IMR-90 (cell line): ENCODE measurements at regions of chr20 and their contacts with region 1.

Region 1: GRCh38 chr20:56554869-56555268 is 21.8 kb downstream of the FAM209B start:
- DNase-seq: peak; percentile 90
- ATAC-seq: peak; percentile 81
- H3K4me3 ChIP-seq: no peak overlapping the region
- H3K27ac ChIP-seq: no peak overlapping the region
- H3K4me1 ChIP-seq: no peaks in the 10 kb centered on the region
- H3K27me3 ChIP-seq: peaks cover 10% of the 10 kb centered on the region
- CTCF ChIP-seq: no peak
- POLR2A ChIP-seq: no peak
- RAD21 ChIP-seq: no peak

Region 2: GRCh38 chr20:56453352-56453751 is 101.5 kb before region 1 on chr20:
- CTCF ChIA-PET with region 1: no interaction called
- POLR2A ChIA-PET with region 1: no interaction called
- dilution Hi-C with region 1: no loop called
- in situ Hi-C with region 1: no loop called
- intact Hi-C with region 1: no loop called
- DNase-seq: no peak
- ATAC-seq: no peak
- H3K4me3 ChIP-seq: no peak overlapping the region
- H3K27ac ChIP-seq: no peak overlapping the region
- H3K4me1 ChIP-seq: no peaks in the 10 kb centered on the region
- H3K27me3 ChIP-seq: no peaks in the 10 kb centered on the region
- CTCF ChIP-seq: no peak
- POLR2A ChIP-seq: no peak
- RAD21 ChIP-seq: no peak

Region 3: DNA sequence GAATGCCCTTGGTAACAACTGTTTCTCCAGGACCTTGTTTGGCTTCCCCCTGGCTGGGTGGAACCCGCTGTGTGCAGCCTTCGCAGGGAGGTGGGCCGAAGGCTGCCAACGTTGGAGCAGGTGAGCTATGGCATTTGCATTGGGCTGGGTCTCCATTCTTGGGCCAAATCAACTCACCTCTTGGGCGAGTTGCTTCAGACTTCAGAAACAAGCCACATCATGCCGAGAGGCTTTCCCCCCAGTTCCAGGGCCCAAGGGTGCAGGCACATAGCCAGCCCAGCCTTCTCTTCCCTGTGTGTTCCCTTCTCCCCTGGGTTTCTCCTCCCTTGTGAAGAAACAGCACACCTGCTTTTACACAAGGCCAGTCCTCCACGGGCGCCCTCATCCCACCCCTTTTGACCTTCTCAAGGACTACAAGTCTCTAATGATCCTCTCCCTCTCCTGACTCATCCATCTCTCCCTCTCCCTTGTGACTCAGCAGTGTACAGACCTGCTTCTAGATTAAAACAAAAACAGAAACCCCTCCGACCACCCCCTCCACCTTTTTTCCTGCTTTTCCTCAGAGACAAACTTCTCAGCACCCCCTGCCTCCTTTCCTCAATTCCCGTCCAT is 19.8 kb after region 1 on chr20:
- CTCF ChIA-PET with region 1: interaction called, 16 read pairs
- POLR2A ChIA-PET with region 1: no interaction called
- dilution Hi-C with region 1: no loop called
- in situ Hi-C with region 1: no loop called
- intact Hi-C with region 1: loop called (anchors 1 kb)
- DNase-seq: no peak
- ATAC-seq: no peak
- H3K4me3 ChIP-seq: no peak overlapping the region
- H3K27ac ChIP-seq: no peak overlapping the region
- H3K4me1 ChIP-seq: no peaks in the 10 kb centered on the region
- H3K27me3 ChIP-seq: peaks cover 14% of the 10 kb centered on the region
- CTCF ChIP-seq: no peak
- POLR2A ChIP-seq: no peak
- RAD21 ChIP-seq: no peak

Region 4: GRCh38 chr20:56974499-56975236 is 419.8 kb after region 1 on chr20:
- CTCF ChIA-PET with region 1: interaction called, 10 read pairs
- POLR2A ChIA-PET with region 1: no interaction called
- dilution Hi-C with region 1: no loop called
- in situ Hi-C with region 1: loop called (anchors 5 kb)
- intact Hi-C with region 1: loop called (anchors 1 kb)
- DNase-seq: peak; percentile 37
- ATAC-seq: peak; percentile 49; the same call in 1 of the 2 replicates
- H3K4me3 ChIP-seq: no peak overlapping the region
- H3K27ac ChIP-seq: no peak overlapping the region
- H3K4me1 ChIP-seq: no peaks in the 10 kb centered on the region
- H3K27me3 ChIP-seq: peaks cover 5% of the 10 kb centered on the region; the same call in 1 of the 2 replicates
- CTCF ChIP-seq: peak; percentile 61
- POLR2A ChIP-seq: no peak
- RAD21 ChIP-seq: peak; percentile 63

Region 5: DNA sequence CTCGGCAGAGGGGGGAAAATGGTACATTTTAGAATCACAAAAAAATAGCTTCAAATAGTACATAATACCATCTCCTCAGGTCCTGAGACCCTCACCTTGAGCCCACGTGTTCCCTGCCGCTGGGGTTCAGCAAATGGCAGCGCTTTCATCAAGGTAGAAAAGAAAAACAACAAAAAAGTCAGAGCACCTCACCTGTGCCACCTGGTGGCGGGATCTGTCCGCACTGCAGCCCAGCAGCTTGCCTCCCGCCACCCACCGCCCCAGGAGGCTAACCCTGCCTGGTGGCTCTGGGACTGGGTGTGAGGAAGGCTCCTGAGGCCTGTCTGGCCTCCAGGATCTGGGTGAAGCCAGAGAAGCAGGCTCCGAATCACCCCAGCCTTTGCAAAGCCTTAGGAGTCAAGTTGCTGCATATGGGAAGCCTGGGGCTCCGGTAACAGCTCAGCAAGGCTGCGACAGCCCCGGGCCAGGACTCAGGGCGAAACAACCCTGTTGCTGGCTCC is 440.8 kb after region 1 on chr20:
- CTCF ChIA-PET with region 1: no interaction called
- POLR2A ChIA-PET with region 1: no interaction called
- dilution Hi-C with region 1: no loop called
- in situ Hi-C with region 1: no loop called
- intact Hi-C with region 1: loop called (anchors 1 kb)
- DNase-seq: no peak
- ATAC-seq: no peak
- H3K4me3 ChIP-seq: no peak overlapping the region
- H3K27ac ChIP-seq: no peak overlapping the region
- H3K4me1 ChIP-seq: no peaks in the 10 kb centered on the region
- H3K27me3 ChIP-seq: no peaks in the 10 kb centered on the region; the same call in 1 of the 2 replicates
- CTCF ChIP-seq: peak; percentile 32; the same call in 1 of the 2 replicates
- POLR2A ChIP-seq: no peak
- RAD21 ChIP-seq: peak; percentile 21; the same call in 1 of the 2 replicates

Region 6: GRCh38 chr20:57048027-57048869 is 493.4 kb after region 1 on chr20:
- CTCF ChIA-PET with region 1: no interaction called
- POLR2A ChIA-PET with region 1: no interaction called
- dilution Hi-C with region 1: no loop called
- in situ Hi-C with region 1: no loop called
- intact Hi-C with region 1: loop called (anchors 1 kb)
- DNase-seq: no peak
- ATAC-seq: no peak
- H3K4me3 ChIP-seq: no peak overlapping the region
- H3K27ac ChIP-seq: no peak overlapping the region
- H3K4me1 ChIP-seq: no peaks in the 10 kb centered on the region
- H3K27me3 ChIP-seq: no peaks in the 10 kb centered on the region
- CTCF ChIP-seq: peak; percentile 29; the same call in 1 of the 2 replicates
- POLR2A ChIP-seq: no peak
- RAD21 ChIP-seq: no peak

Region 7: GRCh38 chr20:57089691-57090150 is 534.9 kb after region 1 on chr20:
- CTCF ChIA-PET with region 1: no interaction called
- POLR2A ChIA-PET with region 1: no interaction called
- dilution Hi-C with region 1: no loop called
- in situ Hi-C with region 1: no loop called
- intact Hi-C with region 1: loop called (anchors 1 kb)
- DNase-seq: peak; percentile 5
- ATAC-seq: peak; percentile 85
- H3K4me3 ChIP-seq: no peak overlapping the region
- H3K27ac ChIP-seq: no peak overlapping the region
- H3K4me1 ChIP-seq: no peaks in the 10 kb centered on the region
- H3K27me3 ChIP-seq: no peaks in the 10 kb centered on the region
- CTCF ChIP-seq: peak; percentile 59
- POLR2A ChIP-seq: no peak
- RAD21 ChIP-seq: peak; percentile 56

Region 8: GRCh38 chr20:57351042-57351783 is 796.3 kb after region 1 on chr20 and contains the start of gene RAE1:
- CTCF ChIA-PET with region 1: interaction called, 7 read pairs
- POLR2A ChIA-PET with region 1: no interaction called
- dilution Hi-C with region 1: no loop called
- in situ Hi-C with region 1: loop called (anchors 5 kb)
- intact Hi-C with region 1: loop called (anchors 1 kb)
- DNase-seq: peak; percentile 92
- ATAC-seq: peak; percentile 93
- H3K4me3 ChIP-seq: peak within 1 kb of the TSS; percentile 82
- H3K27ac ChIP-seq: peak within 1 kb of the TSS; percentile 89
- H3K4me1 ChIP-seq: peaks cover 3% of the 10 kb centered on the region; the same call in 1 of the 2 replicates
- H3K27me3 ChIP-seq: no peaks in the 10 kb centered on the region
- CTCF ChIP-seq: no peak
- POLR2A ChIP-seq: peak; percentile 91
- RAD21 ChIP-seq: no peak
- total RNA-seq, gene RAE1: 32.5 and 32.8 TPM in 2 replicates